ENCODE measurements at regions of chr6 and their contacts with region 1.

Region 1: GRCh38 chr6:160355001-160355400 is 6.8 kb downstream of the SLC22A3 start:
- DNase-seq: no peak
- ATAC-seq: peak; percentile 42
- H3K4me3 ChIP-seq: no peak overlapping the region
- H3K27ac ChIP-seq: peak overlapping the region; percentile 10 to 86
- H3K4me1 ChIP-seq: peaks cover 7 to 19% of the 10 kb centered on the region in 2 donors
- H3K27me3 ChIP-seq: no peaks in the 10 kb centered on the region

Region 2: DNA sequence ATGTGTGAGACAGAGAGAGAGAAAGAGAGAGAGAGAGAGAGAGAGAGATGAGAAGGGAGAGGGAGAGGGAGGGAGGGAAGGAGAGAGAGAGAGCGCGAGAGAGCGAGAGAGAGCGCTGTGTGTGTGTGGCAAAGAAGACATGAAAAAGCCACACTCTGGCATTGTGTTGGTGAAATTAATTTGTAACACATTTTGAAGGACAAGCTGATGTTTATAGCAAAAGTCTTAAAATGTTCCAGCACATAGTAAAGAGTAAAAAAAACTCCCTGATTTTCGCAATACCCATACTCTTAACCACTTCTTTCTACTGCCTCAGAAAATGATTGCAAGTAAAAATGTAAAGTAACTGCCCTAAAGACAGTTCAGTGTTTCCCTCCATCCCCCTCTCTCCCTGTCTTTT is 176.7 kb before region 1 on chr6:
- intact Hi-C with region 1: no loop called
- DNase-seq: no peak
- ATAC-seq: no peak
- H3K4me3 ChIP-seq: no peak overlapping the region
- H3K27ac ChIP-seq: no peak overlapping the region
- H3K4me1 ChIP-seq: no peaks in the 10 kb centered on the region
- H3K27me3 ChIP-seq: no peaks in the 10 kb centered on the region

Region 3: DNA sequence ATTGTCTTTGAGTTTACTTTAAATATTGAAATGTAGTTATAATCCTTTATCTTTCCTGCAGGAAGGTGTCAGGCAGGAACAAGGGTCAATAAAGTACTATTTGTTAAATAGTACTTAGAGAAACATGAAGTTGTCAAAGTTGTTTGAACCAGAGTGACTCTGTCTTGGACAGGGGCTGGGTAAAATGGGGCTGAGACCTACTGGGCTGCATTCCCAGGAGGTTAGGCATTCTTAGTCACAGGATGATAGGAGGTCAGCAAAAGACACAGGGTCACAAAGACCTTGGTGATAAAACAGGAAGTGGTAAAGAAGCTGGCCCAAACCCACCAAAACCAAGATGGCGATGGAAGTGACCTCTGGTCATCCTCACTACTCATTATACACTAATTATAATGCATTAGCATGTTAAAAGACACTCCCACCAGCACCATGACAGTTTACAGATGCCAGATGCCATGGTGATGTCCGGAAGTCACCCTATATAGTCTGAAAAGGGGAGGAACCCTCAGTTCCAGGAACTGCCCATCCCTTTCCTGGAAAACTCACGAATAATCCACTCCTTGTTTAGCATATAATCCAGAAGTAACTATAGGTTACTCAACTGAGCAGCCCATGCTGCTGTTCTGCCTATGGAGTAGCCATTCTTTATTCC is 116.1 kb before region 1 on chr6:
- intact Hi-C with region 1: no loop called
- DNase-seq: no peak
- ATAC-seq: no peak
- H3K4me3 ChIP-seq: no peak overlapping the region
- H3K27ac ChIP-seq: no peak overlapping the region
- H3K4me1 ChIP-seq: no peaks in the 10 kb centered on the region
- H3K27me3 ChIP-seq: no peaks in the 10 kb centered on the region

Region 4: GRCh38 chr6:160297310-160297709 is 57.7 kb before region 1 on chr6:
- intact Hi-C with region 1: no loop called
- DNase-seq: peak in 1 of 2 donors; percentile 68
- ATAC-seq: no peak
- H3K4me3 ChIP-seq: no peak overlapping the region
- H3K27ac ChIP-seq: no peak overlapping the region
- H3K4me1 ChIP-seq: peaks cover 0 to 3% of the 10 kb centered on the region in 2 donors
- H3K27me3 ChIP-seq: no peaks in the 10 kb centered on the region

Region 5: GRCh38 chr6:160398674-160399271 is 43.8 kb after region 1 on chr6:
- intact Hi-C with region 1: loop called in 1 of 2 experiments (anchors 5 kb)
- DNase-seq: no peak
- ATAC-seq: no peak
- H3K4me3 ChIP-seq: no peak overlapping the region
- H3K27ac ChIP-seq: peak overlapping the region; percentile 75 to 95
- H3K4me1 ChIP-seq: peaks cover 9 to 14% of the 10 kb centered on the region in 2 donors
- H3K27me3 ChIP-seq: no peaks in the 10 kb centered on the region

Region 6: GRCh38 chr6:160428069-160428430 is 73.0 kb after region 1 on chr6:
- intact Hi-C with region 1: loop called in 1 of 2 experiments (anchors 2 kb)
- DNase-seq: peak in 1 of 2 donors; percentile 63
- ATAC-seq: no peak
- H3K4me3 ChIP-seq: no peak overlapping the region
- H3K27ac ChIP-seq: peak overlapping the region in 1 of 2 donors; percentile 67
- H3K4me1 ChIP-seq: peaks cover 4 to 8% of the 10 kb centered on the region in 2 donors
- H3K27me3 ChIP-seq: no peaks in the 10 kb centered on the region

Region 7: DNA sequence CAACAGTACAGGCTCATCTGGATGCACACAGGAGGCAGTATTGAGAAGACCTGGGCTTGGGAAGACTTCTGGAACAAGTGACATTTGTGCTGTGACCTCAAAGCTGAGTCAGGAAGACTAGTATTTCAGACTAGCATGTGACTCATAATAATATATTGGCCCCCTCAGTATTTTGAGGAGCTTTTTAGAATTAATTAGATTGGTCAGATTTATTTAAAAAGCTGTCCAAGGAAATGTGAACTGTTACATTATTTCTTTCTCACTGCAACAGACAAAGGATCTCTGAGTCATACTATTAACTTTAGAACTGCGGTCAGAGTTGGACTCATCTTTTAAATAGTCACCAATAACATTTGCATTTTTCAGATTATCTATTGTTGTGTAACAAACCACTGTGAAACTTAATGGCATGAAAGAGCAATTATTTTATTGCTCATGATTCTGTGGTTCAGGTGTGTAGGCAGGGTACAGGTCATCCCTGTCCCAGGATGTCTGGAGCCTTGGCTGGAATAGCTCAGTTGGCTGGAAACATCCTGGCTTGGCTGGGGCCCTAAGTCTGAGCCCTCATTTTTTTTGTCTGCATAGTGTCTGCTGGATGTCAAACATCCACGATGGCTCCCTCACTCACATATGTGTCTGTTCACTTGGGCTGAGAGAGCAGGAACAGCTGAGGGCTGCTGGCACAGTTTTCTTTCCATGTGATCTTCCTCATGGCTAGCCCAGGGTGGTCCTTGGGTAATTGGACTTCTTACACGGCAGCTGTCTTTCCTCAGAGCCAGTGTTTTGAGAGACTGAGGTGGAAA is 683.4 kb after region 1 on chr6:
- intact Hi-C with region 1: no loop called
- DNase-seq: no peak
- ATAC-seq: peak; percentile 56
- H3K4me3 ChIP-seq: no peak overlapping the region
- H3K27ac ChIP-seq: no peak overlapping the region
- H3K4me1 ChIP-seq: peaks cover 2% of the 10 kb centered on the region in 2 donors
- H3K27me3 ChIP-seq: no peaks in the 10 kb centered on the region

Measured in aorta (tissue), 5 donors.